Heart left ventricle (tissue), 16 donors: ENCODE measurements at regions of chr4 and their contacts with region 1.

Region 1: GRCh38 chr4:242121-242848 is 63.0 kb downstream of the ZNF732 start:
- DNase-seq: peak; percentile 54 to 76 (median 67)
- ATAC-seq: peak; percentile 81 to 98 (median 94)
- H3K4me3 ChIP-seq: peak overlapping the region; percentile 16 to 67 (median 52)
- H3K27ac ChIP-seq: peak overlapping the region in 10 of 12 donors; percentile 10 to 77 (median 41)
- H3K4me1 ChIP-seq: peaks cover 0 to 12% (median 9%) of the 10 kb centered on the region in 12 donors
- H3K27me3 ChIP-seq: no peaks in the 10 kb centered on the region
- CTCF ChIP-seq: peak; percentile 84 to 98 (median 93)
- POLR2A ChIP-seq: no peak

Region 2: GRCh38 chr4:328729-329128 is 86.4 kb after region 1 on chr4:
- intact Hi-C with region 1: loop called in 4 of 10 experiments (anchors 5 to 10 kb)
- DNase-seq: no peak
- ATAC-seq: no peak
- H3K4me3 ChIP-seq: no peak overlapping the region
- H3K27ac ChIP-seq: no peak overlapping the region
- H3K4me1 ChIP-seq: no peaks in the 10 kb centered on the region
- H3K27me3 ChIP-seq: no peaks in the 10 kb centered on the region
- CTCF ChIP-seq: no peak
- POLR2A ChIP-seq: no peak

Region 3: DNA sequence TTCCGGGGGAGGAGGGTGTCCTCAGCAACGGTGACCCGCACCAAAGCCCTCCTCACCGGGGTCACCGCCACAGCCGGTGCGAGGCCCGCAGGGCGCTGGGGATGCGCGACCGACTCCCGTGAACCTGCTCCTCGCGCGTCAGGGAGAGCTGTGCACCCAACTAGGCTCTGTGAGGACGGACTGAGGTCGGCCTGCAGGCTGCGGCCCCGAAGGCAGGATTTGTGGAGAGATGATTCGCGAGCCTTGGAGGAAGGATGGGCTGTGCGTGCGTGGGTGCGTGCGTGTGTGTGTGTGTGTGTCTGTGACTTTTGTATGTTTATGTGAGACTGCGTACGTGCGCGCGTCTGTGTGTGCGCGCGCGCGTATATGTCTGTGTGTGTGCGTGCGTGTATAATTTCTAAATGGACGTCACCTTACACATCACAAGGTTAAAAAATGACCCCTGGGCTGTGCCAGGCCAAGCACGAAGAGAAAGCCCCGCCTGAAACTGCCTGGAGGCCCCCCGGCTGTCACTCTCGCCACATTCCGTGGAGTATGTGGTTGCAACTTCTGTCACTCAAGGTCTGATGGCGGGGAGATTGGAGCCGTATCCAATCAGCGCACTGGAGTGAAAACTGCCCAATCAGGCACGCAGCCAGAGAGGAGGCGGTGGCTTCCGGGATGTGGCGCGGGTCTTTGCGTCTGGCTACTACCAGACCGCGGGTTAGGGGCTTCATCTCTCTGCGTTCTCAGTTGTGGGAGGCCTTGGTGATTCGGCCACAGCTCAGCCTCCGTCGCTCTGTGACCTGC is 95.1 kb after region 1 on chr4 and contains the start of gene ZNF141:
- intact Hi-C with region 1: loop called in 4 of 10 experiments (anchors 5 to 10 kb)
- DNase-seq: peak; percentile 95 to 98 (median 98)
- ATAC-seq: peak; percentile 96 to 99 (median 96)
- H3K4me3 ChIP-seq: peak within 1 kb of the TSS; percentile 66 to 99 (median 93)
- H3K27ac ChIP-seq: peak within 1 kb of the TSS; percentile 93 to 99 (median 95)
- H3K4me1 ChIP-seq: peaks cover 0 to 30% (median 16%) of the 10 kb centered on the region in 12 donors
- H3K27me3 ChIP-seq: no peaks in the 10 kb centered on the region
- CTCF ChIP-seq: no peak
- POLR2A ChIP-seq: peak; percentile 70 to 79
- total RNA-seq, gene ZNF141: 3.3 to 12.5 (median 8.7) TPM

Region 4: GRCh38 chr4:498328-498904 is 256.1 kb after region 1 on chr4:
- intact Hi-C with region 1: loop called in 1 of 10 experiments (anchors 10 kb)
- DNase-seq: no peak
- ATAC-seq: peak in 2 of 4 donors; percentile 14 to 29
- H3K4me3 ChIP-seq: peak overlapping the region; percentile 70 to 100 (median 85)
- H3K27ac ChIP-seq: peak overlapping the region; percentile 56 to 92 (median 88)
- H3K4me1 ChIP-seq: peaks cover 0 to 31% (median 16%) of the 10 kb centered on the region in 12 donors
- H3K27me3 ChIP-seq: no peaks in the 10 kb centered on the region
- CTCF ChIP-seq: no peak
- POLR2A ChIP-seq: no peak

Region 5: DNA sequence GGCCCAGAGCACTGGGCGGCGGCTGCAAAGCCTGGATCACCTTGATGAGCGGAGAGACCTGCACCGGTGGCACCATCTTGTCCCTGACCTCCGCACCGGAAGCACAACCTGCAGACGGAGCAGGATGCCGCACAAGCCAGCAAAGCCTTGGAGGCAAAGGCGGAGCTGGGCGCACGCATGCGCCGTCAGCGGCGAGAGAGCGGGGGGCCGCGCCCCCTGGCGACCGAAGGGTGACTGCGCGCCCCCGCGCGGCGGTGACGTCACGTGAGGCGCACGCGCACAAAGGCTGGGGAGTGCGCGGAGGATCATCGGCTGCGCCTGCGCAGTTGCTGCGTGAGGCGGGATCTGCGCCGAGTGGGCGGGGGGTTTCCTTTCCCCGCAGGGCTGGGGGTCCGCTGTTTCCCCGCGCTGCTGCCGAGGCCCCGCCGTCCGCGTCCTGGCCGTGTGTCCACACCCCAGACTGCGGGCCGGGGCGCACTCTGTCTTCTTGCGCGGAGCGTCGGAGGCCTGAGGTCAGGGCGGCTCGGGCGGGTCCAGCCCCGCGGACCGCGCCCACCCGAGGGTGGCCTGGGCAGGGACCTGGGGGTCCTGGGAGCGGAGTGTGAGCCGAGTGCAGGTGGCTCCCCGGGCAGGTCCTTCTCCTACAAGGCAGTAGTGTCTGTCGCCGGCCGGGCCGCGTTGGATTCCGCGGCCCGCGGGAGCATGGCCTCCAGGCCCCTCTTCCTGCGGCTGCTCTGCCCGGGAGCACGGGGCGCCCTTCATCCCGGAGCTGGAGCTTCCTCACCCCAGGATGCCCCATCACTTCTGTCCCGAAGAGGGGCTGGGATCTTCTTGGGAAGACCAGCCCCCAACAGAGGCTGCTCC is 432.1 kb after region 1 on chr4 and contains the starts of genes ATP5ME and MYL5:
- intact Hi-C with region 1: loop called in 3 of 10 experiments (anchors 5 to 10 kb)
- DNase-seq: peak; percentile 96 to 99 (median 97)
- ATAC-seq: peak; percentile 78 to 90 (median 88)
- H3K4me3 ChIP-seq: peak within 1 kb of the TSS; percentile 56 to 99 (median 90)
- H3K27ac ChIP-seq: peak within 1 kb of the TSS; percentile 83 to 98 (median 93)
- H3K4me1 ChIP-seq: peaks cover 6 to 30% (median 17%) of the 10 kb centered on the region in 12 donors
- H3K27me3 ChIP-seq: no peaks in the 10 kb centered on the region
- CTCF ChIP-seq: peak; percentile 88 to 98 (median 96)
- POLR2A ChIP-seq: peak in 1 of 2 donors; percentile 92
- total RNA-seq, gene ATP5ME: 210 to 906 (median 800) TPM
- total RNA-seq, gene MYL5: 1.4 to 12.9 (median 5.6) TPM